SK-N-SH (cell line): ENCODE measurements at regions of chr10 and their contacts with region 1.

Region 1: DNA sequence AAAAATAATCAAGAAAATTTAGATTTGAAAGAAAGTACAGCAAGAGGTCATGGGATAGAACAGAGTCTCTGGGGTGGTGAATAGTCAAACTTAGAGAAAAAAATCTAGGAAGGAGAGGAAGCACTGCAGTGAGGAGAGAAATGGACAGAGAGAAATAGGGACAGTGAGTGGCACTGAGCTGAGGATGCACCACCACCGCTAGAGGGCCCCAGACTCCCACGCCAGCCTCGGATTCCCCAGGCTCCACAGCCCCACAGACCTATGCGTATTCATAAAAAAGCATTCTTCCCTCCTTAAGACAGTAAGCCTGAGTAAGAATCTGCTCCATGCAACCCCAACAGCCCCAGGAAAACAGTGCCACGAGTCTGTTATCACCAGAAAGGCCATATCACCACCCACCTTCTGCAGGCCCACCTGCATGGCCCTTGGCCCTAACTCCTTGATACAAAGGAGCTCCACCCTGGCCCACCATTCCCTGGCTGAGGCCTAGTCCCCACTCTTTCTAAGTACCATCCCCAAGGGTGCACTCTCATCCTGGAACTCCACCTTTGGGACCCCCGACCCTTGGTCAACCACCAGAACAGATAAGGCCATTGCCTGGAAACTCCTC is 91.0 kb downstream of the ALOX5 start:
- DNase-seq: peak; percentile 88
- H3K4me3 ChIP-seq: no peak overlapping the region; a peak in 1 of 4 replicates
- H3K27ac ChIP-seq: no peak overlapping the region
- H3K4me1 ChIP-seq: peaks cover 0 to 13% of the 10 kb centered on the region in 2 experiments; a peak in 1 of 4 replicates
- H3K27me3 ChIP-seq: no peaks in the 10 kb centered on the region
- CTCF ChIP-seq: peak; percentile 96
- EP300 ChIP-seq: no peak
- RAD21 ChIP-seq: peak; percentile 98

Region 2: DNA sequence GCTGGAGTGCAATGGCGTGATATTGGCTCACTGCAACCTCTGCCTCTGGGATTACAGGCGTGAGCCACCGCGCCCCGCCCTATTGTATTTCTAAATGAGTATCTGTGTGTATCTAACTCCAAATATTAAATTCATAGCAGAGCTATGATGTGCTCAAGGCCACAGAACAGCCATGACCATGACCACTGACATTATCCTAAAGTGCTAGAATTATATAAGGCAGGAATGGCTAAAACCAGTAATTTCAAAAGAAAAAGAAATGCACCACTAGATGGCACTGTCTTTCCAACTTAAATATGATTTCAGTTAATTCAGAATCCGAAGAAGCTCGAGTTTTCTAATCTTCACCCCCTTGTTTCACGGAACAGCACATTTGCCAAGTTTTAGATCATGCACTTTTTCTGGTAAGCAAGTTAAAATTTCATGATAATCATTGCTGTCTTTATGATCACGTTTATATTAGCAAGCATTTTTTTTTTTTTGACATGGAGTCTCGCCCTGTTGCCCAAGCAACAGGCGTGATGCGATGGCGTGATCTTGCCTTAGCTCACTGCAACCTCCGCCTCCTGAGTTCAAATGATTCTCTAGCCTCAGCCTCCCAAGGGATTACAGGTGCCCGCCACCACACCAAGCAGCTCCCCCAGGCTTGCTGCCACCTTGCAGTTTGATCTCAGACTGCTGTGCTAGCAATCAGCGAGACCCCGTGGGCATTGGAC is 214.9 kb before region 1 on chr10:
- CTCF ChIA-PET with region 1: interaction called, 13 read pairs
- POLR2A ChIA-PET with region 1: no interaction called
- DNase-seq: peak; percentile 38
- H3K4me3 ChIP-seq: peak overlapping the region; percentile 33 to 61; a peak in 3 of 4 replicates
- H3K27ac ChIP-seq: no peak overlapping the region
- H3K4me1 ChIP-seq: no peaks in the 10 kb centered on the region; a peak in 1 of 4 replicates
- H3K27me3 ChIP-seq: peaks cover 20% of the 10 kb centered on the region; the same call in 1 of the 2 replicates
- CTCF ChIP-seq: peak; percentile 72
- EP300 ChIP-seq: no peak
- RAD21 ChIP-seq: peak; percentile 70

Region 3: DNA sequence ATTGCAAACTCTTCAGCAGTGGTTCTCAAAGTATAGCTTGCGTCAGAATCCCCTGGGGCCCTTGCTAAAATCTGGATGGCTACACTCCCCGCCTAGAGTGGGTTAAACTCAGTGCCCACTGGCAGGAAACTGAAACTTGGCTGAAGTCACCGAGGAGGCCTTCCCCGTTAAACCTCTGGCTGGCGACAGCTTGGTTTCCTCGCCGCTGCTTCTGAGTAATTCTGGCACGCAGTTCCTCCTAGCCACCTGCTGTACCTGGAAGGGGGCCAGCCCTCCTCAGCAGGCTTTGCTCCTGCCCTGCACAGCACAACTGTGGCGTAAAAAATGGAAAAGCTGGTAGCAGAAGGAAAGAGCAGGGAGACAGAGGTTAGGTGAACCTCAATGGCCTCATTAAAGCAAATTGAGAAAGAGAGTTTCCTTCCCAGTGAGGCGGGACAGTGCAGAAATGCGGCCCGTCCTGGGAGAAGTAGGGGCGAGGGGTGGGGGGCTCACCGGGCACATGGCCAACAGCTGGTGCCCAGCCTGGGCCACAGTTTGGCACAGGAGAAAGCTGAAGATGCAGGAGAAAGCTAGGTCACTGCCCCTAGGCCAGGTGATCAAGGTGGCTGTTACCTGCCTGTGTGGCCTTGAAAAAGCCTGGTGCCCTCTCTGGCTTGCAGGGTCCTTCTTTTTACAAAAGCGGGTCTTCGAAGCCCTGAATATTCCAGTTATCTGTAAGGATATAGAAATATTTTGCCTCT is 44.4 kb before region 1 on chr10:
- CTCF ChIA-PET with region 1: interaction called, 13 read pairs
- POLR2A ChIA-PET with region 1: no interaction called
- DNase-seq: no peak
- H3K4me3 ChIP-seq: no peak overlapping the region
- H3K27ac ChIP-seq: no peak overlapping the region
- H3K4me1 ChIP-seq: peaks cover 0 to 12% of the 10 kb centered on the region in 2 experiments; a peak in 1 of 4 replicates
- H3K27me3 ChIP-seq: no peaks in the 10 kb centered on the region
- CTCF ChIP-seq: no peak
- EP300 ChIP-seq: no peak
- RAD21 ChIP-seq: no peak

Region 4: GRCh38 chr10:45453639-45454255 is 11.3 kb before region 1 on chr10:
- CTCF ChIA-PET with region 1: interaction called, 18 read pairs
- POLR2A ChIA-PET with region 1: no interaction called
- DNase-seq: no peak
- H3K4me3 ChIP-seq: no peak overlapping the region
- H3K27ac ChIP-seq: peak overlapping the region in 1 of 2 experiments; percentile 22; a peak in 1 of 4 replicates
- H3K4me1 ChIP-seq: peaks cover 0 to 17% of the 10 kb centered on the region in 2 experiments; a peak in 1 of 4 replicates
- H3K27me3 ChIP-seq: no peaks in the 10 kb centered on the region
- CTCF ChIP-seq: no peak
- EP300 ChIP-seq: no peak
- RAD21 ChIP-seq: no peak

Region 5: GRCh38 chr10:45480294-45480693 is 15.2 kb after region 1 on chr10:
- CTCF ChIA-PET with region 1: interaction called, 11 read pairs
- POLR2A ChIA-PET with region 1: no interaction called
- DNase-seq: no peak
- H3K4me3 ChIP-seq: no peak overlapping the region
- H3K27ac ChIP-seq: no peak overlapping the region
- H3K4me1 ChIP-seq: no peaks in the 10 kb centered on the region
- H3K27me3 ChIP-seq: no peaks in the 10 kb centered on the region
- CTCF ChIP-seq: no peak
- EP300 ChIP-seq: no peak
- RAD21 ChIP-seq: no peak

Region 6: DNA sequence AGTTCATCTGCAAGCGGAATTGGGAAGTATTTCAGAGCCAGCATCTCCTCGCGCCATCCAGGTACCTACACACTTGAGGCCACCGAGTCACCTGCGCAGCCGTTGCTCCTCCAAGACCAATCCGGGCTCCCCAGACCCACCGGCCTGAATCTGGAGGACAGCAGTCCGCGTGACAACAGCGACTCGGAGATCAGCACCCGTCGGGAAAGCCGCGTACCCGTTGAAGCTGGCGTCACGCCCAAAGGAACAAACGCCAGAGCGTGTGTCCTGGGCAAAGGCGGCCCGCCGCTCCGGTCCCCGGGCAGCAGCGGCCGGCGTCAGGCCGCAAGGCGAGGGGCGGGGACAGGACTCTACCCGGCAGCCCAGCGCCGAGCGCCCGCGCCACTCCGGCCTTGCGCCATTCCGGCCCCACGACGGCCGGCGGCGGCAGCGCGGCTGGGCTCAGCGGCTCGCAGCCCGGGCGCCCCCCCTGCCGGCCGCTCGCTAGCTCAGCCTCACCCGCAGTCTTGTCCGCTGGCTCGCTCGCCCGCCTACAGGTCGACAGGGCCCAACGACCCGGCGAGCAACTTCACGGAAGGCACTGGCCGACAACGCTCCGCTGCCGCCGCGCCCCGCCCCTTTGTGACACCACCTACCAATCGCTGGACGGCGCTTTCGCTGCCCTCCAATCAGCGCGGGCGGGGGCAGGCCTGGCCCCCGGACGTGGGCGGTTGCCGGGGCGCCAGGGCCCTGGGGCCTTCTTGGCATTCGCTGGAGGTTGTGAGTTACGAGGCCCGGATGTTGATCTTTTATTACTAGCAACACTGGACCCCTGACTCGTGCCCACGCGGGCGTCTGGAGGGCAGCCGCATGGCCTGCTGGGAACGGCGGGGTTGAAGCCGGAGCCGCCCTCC is 207.4 kb after region 1 on chr10 and contains the start of gene ZFAND4:
- CTCF ChIA-PET with region 1: interaction called, 32 read pairs
- POLR2A ChIA-PET with region 1: no interaction called
- DNase-seq: peak; percentile 99
- H3K4me3 ChIP-seq: peak within 1 kb of the TSS; percentile 76 to 94
- H3K27ac ChIP-seq: peak within 1 kb of the TSS; percentile 53 to 86
- H3K4me1 ChIP-seq: peaks cover 0 to 5% of the 10 kb centered on the region in 2 experiments; a peak in 1 of 4 replicates
- H3K27me3 ChIP-seq: no peaks in the 10 kb centered on the region
- CTCF ChIP-seq: peak; percentile 52
- EP300 ChIP-seq: peak in 1 of 2 experiments; percentile 45; a peak in 1 of 4 replicates
- RAD21 ChIP-seq: peak; percentile 67
- polyA plus RNA-seq, gene ZFAND4: 2.0 and 2.1 TPM in 2 replicates